ENCODE measurements at regions of chr10 and their contacts with region 1.

Region 1: DNA sequence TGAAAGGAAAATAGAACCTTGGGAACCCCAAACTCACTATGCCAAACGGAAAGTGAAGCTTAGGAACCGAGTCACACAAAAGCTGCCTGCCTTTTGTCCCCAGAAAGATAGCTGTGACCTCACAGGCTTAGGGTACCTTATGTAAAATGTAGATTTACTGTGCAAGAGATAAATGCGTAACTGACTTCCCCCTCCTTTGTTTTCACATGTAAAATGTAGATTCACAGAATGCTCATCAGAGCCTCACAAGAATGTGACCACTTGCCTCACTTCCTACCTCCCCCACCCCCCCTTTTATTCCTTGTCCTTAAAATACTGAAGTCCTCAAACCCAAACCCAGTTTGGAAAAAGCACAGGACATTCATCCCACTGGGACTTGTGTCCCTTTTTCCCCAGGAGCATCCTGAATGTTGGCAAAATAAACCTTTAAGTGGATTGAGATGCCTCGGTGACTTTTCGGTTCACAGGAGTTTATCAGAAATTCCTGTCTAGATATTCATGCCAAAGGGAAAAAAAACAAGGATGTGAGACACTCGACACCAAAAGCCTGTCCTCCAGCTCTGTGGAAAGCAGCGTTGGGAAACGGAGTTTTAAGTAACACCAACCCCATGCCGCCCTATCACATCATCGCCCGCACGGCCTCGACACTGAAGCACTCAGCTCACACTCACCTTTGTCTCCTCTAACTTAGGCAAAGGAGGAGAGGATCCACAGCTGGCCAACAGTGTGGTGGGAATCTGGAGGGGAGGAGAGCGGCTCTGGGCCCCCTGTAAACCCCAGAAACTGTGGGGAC is 45.9 kb downstream of the SVIL start:
- DNase-seq: no peak
- ATAC-seq: no peak
- H3K4me3 ChIP-seq: no peak overlapping the region
- H3K27ac ChIP-seq: no peak overlapping the region
- H3K4me1 ChIP-seq: peaks cover 8% of the 10 kb centered on the region; the same call in 2 of the 3 replicates
- CTCF ChIP-seq: no peak
- EP300 ChIP-seq: no peak
- POLR2A ChIP-seq: no peak
- RAD21 ChIP-seq: no peak

Region 2: DNA sequence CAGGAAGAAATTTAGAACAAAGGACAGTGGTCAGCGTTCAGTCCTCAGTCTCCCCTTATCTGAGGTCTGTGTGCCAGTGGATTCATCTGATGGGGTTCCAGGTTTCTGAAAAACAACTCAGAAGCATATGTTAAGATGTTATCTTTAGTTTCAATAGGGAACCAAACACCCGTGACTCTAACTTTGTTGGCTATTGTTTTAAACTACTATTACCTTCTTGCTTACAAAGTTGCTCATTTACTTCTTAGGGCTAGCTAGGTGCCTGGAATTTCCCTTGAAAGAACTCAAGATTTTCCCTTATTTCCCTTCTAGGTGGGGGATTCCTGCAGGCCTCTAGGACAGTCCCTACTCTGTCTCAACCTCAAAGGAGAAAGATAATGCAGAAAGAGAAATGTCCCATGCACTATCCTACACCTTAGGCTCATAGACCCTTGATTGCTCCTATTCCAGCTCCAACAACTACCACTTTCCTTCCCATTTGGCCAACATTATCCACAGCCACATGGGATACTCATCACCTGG is 492.5 kb before region 1 on chr10:
- CTCF ChIA-PET with region 1: no interaction called
- POLR2A ChIA-PET with region 1: no interaction called
- DNase-seq: no peak
- ATAC-seq: no peak
- H3K4me3 ChIP-seq: no peak overlapping the region
- H3K27ac ChIP-seq: no peak overlapping the region
- H3K4me1 ChIP-seq: no peaks in the 10 kb centered on the region
- CTCF ChIP-seq: no peak
- EP300 ChIP-seq: no peak
- POLR2A ChIP-seq: no peak
- RAD21 ChIP-seq: no peak

Region 3: GRCh38 chr10:29266641-29267040 is 322.2 kb before region 1 on chr10:
- CTCF ChIA-PET with region 1: no interaction called
- POLR2A ChIA-PET with region 1: no interaction called
- DNase-seq: no peak
- ATAC-seq: no peak
- H3K4me3 ChIP-seq: no peak overlapping the region
- H3K27ac ChIP-seq: no peak overlapping the region
- H3K4me1 ChIP-seq: no peaks in the 10 kb centered on the region
- CTCF ChIP-seq: no peak
- EP300 ChIP-seq: no peak
- POLR2A ChIP-seq: no peak
- RAD21 ChIP-seq: no peak

Region 4: DNA sequence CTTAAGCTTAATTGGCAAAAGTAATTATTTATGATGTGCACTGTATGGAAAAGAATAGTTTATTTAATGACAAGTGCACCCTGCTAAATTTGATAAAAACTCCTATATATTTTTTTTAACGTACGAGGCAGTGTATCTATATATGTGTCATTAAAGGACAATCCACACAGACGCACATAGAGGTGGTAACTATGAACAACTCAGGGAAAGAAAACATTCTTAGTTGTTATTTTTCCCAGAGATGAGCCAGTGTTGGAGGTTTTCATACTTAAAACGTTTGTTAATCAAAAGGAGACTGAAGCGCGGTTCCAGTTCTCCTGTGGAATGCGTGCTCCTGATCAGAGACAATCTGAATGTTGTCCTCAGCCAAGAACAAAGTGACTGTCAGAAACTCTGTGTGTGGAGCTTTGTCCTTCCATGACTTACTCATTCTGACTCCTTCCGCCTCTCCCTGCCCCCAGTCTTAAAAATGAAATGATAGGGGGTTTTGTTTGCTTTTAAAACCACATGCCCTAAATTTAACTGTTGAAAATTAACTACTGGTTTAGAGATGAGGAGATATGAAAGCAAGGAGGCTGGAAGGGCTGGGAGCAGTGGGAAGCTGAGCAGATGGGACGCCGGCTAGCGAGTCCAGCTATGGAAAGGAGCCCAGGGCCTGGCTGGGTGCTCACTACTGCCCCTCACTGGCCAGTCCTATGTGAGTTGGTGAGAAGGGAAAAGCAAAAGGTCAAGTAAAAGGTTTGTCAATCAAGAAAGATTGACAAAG is 53.6 kb before region 1 on chr10:
- CTCF ChIA-PET with region 1: interaction called, 16 read pairs
- POLR2A ChIA-PET with region 1: no interaction called
- DNase-seq: peak; percentile 80 to 84
- ATAC-seq: peak; percentile 91 to 95
- H3K4me3 ChIP-seq: peak overlapping the region; percentile 20; the same call in 2 of the 3 replicates
- H3K27ac ChIP-seq: peak overlapping the region; percentile 67 to 82
- H3K4me1 ChIP-seq: peaks cover 32% of the 10 kb centered on the region
- CTCF ChIP-seq: peak; percentile 76
- EP300 ChIP-seq: no peak
- POLR2A ChIP-seq: no peak
- RAD21 ChIP-seq: peak; percentile 23 to 46; a peak in 2 of 5 replicates

Region 5: GRCh38 chr10:29569795-29570194 is 19.0 kb before region 1 on chr10:
- CTCF ChIA-PET with region 1: interaction called, 11 read pairs
- POLR2A ChIA-PET with region 1: no interaction called
- DNase-seq: no peak
- ATAC-seq: no peak
- H3K4me3 ChIP-seq: no peak overlapping the region
- H3K27ac ChIP-seq: no peak overlapping the region
- H3K4me1 ChIP-seq: no peaks in the 10 kb centered on the region
- CTCF ChIP-seq: no peak
- EP300 ChIP-seq: no peak
- POLR2A ChIP-seq: no peak
- RAD21 ChIP-seq: no peak

Region 6: GRCh38 chr10:29608062-29608461 is 19.2 kb after region 1 on chr10:
- CTCF ChIA-PET with region 1: interaction called, 34 read pairs
- POLR2A ChIA-PET with region 1: no interaction called
- DNase-seq: no peak
- ATAC-seq: no peak; a peak in 2 of 6 replicates
- H3K4me3 ChIP-seq: no peak overlapping the region
- H3K27ac ChIP-seq: no peak overlapping the region
- H3K4me1 ChIP-seq: no peaks in the 10 kb centered on the region
- CTCF ChIP-seq: no peak
- EP300 ChIP-seq: no peak
- POLR2A ChIP-seq: no peak
- RAD21 ChIP-seq: no peak

Region 7: GRCh38 chr10:29621161-29621560 is 32.3 kb after region 1 on chr10:
- CTCF ChIA-PET with region 1: interaction called, 11 read pairs
- POLR2A ChIA-PET with region 1: no interaction called
- DNase-seq: peak in 1 of 2 experiments; percentile 15
- ATAC-seq: 0 out of 6 replicates have a peak, but pooled peaks of 1 of the 2 experiments have one; percentile 15
- H3K4me3 ChIP-seq: no peak overlapping the region
- H3K27ac ChIP-seq: peak overlapping the region in 1 of 2 experiments; percentile 58; a peak in 3 of 6 replicates
- H3K4me1 ChIP-seq: peaks cover 40% of the 10 kb centered on the region
- CTCF ChIP-seq: no peak
- EP300 ChIP-seq: no peak
- POLR2A ChIP-seq: no peak
- RAD21 ChIP-seq: no peak